Naive thymus-derived CD4-positive, alpha-beta T cell (primary cell): ENCODE measurements at regions of chr4 and their contacts with region 1.

Region 1: GRCh38 chr4:142480244-142480643 is 365.9 kb downstream of the INPP4B start:
- DNase-seq: no peak
- ATAC-seq: no peak
- H3K4me3 ChIP-seq: no peak overlapping the region
- H3K4me3 Mint-ChIP-seq: no peak overlapping the region
- H3K27ac ChIP-seq: no peak overlapping the region
- H3K27ac Mint-ChIP-seq: no peak overlapping the region
- H3K4me1 ChIP-seq: peaks cover 0 to 3% of the 10 kb centered on the region in 2 donors
- H3K4me1 Mint-ChIP-seq: peaks cover 7 to 46% (median 38%) of the 10 kb centered on the region in 7 donors
- H3K27me3 ChIP-seq: no peaks in the 10 kb centered on the region
- H3K27me3 Mint-ChIP-seq: no peaks in the 10 kb centered on the region

Region 2: DNA sequence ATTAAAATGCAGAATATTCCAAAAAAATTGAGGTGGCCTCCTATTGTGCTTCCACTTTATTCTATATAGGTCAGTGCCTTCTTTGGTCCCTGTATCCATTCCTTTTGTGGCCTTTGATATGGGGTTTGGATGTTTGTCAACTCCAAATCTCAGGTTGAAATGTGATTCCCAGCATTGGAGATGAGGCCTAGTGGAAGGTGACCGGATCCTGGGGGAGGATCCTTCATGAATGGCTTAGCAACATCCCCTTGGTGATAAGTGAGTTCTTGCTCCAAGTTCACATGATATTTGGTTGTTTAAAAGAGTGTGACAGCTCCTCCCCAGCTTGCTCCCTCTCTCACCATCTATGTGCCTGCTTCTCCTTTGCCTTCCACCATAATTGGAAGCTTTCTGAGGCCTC is 14.7 kb before region 1 on chr4:
- CTCF ChIA-PET with region 1: interaction called, 4 read pairs
- POLR2A ChIA-PET with region 1: interaction called, 4 read pairs
- intact Hi-C with region 1: loop called in 1 of 2 experiments (anchors 2 kb)
- DNase-seq: no peak
- ATAC-seq: no peak
- H3K4me3 ChIP-seq: no peak overlapping the region
- H3K4me3 Mint-ChIP-seq: no peak overlapping the region
- H3K27ac ChIP-seq: no peak overlapping the region
- H3K27ac Mint-ChIP-seq: no peak overlapping the region
- H3K4me1 ChIP-seq: no peaks in the 10 kb centered on the region
- H3K4me1 Mint-ChIP-seq: peaks cover 0 to 12% (median 3%) of the 10 kb centered on the region in 7 donors
- H3K27me3 ChIP-seq: no peaks in the 10 kb centered on the region
- H3K27me3 Mint-ChIP-seq: no peaks in the 10 kb centered on the region

Region 3: GRCh38 chr4:142984871-142985585 is 504.8 kb after region 1 on chr4:
- CTCF ChIA-PET with region 1: no interaction called
- POLR2A ChIA-PET with region 1: no interaction called
- intact Hi-C with region 1: no loop called
- DNase-seq: no peak
- ATAC-seq: no peak
- H3K4me3 ChIP-seq: no peak overlapping the region
- H3K4me3 Mint-ChIP-seq: no peak overlapping the region
- H3K27ac ChIP-seq: no peak overlapping the region
- H3K27ac Mint-ChIP-seq: no peak overlapping the region
- H3K4me1 ChIP-seq: no peaks in the 10 kb centered on the region
- H3K4me1 Mint-ChIP-seq: no peaks in the 10 kb centered on the region
- H3K27me3 ChIP-seq: peaks cover 0 to 6% of the 10 kb centered on the region in 2 donors
- H3K27me3 Mint-ChIP-seq: peaks cover 8 to 13% (median 12%) of the 10 kb centered on the region in 5 donors